CD4-positive, alpha-beta memory T cell (primary cell): ENCODE measurements at regions of chr1 and their contacts with region 1.

Region 1: DNA sequence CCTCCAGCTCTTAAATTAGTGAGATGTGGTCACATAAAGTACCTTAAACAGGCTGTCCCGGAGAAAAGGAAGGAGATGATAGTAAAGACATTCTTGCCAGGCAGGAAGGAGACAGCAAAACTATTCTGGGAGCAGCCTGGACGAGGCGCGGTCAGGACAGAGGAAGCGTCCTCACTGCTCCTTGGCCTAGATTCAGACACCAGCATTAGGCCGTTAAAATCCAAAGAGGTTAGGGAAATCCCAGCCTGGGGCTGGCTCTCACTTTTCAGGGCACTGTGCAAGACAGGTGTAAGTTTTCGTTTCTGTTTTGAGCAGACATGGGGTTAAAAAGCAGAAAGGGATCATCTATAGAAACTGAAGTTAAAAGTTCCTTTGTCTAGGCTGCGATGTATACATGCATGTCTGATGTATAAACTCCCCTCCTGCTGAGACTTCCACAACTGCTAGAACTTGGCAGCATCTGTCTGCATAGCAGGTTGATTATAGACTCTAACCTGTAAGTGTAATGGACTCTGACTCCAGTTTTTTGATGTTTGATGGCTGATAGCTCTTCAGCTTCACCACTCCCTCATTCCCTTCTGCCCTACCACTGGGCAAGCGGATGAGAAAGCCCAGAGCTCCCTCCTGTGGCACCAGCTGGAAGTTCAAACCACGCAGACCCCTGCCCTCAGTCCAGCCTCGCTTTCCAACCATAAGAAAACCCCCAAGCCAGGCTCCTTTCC is 21.5 kb downstream of the STPG1 start:
- DNase-seq: peak; percentile 62 to 75 (median 69)
- H3K4me3 ChIP-seq: peak overlapping the region in 1 of 2 donors; percentile 17
- H3K4me3 Mint-ChIP-seq: peak overlapping the region; percentile 81 to 92 (median 86)
- H3K27ac ChIP-seq: peak overlapping the region; percentile 72
- H3K27ac Mint-ChIP-seq: peak overlapping the region; percentile 94 to 99 (median 98)
- H3K4me1 ChIP-seq: peaks cover 33% of the 10 kb centered on the region
- H3K4me1 Mint-ChIP-seq: peaks cover 23 to 29% (median 26%) of the 10 kb centered on the region in 4 donors
- H3K27me3 ChIP-seq: no peaks in the 10 kb centered on the region
- H3K27me3 Mint-ChIP-seq: no peaks in the 10 kb centered on the region

Region 2: GRCh38 chr1:24186993-24187805 is 204.8 kb before region 1 on chr1 and contains the start of gene IFNLR1:
- CTCF ChIA-PET with region 1: interaction called, 82 read pairs
- POLR2A ChIA-PET with region 1: interaction called, 8 read pairs
- intact Hi-C with region 1: no loop called
- DNase-seq: peak; percentile 42 to 75 (median 57)
- H3K4me3 ChIP-seq: peak within 1 kb of the TSS; percentile 11 to 60
- H3K4me3 Mint-ChIP-seq: peak within 1 kb of the TSS; percentile 86 to 92 (median 90)
- H3K27ac ChIP-seq: peak within 1 kb of the TSS; percentile 50
- H3K27ac Mint-ChIP-seq: peak within 1 kb of the TSS; percentile 53 to 93 (median 83)
- H3K4me1 ChIP-seq: peaks cover 27% of the 10 kb centered on the region
- H3K4me1 Mint-ChIP-seq: peaks cover 20 to 40% (median 34%) of the 10 kb centered on the region in 4 donors
- H3K27me3 ChIP-seq: no peaks in the 10 kb centered on the region
- H3K27me3 Mint-ChIP-seq: no peaks in the 10 kb centered on the region
- total RNA-seq, gene IFNLR1: 3.0 to 4.5 TPM

Region 3: DNA sequence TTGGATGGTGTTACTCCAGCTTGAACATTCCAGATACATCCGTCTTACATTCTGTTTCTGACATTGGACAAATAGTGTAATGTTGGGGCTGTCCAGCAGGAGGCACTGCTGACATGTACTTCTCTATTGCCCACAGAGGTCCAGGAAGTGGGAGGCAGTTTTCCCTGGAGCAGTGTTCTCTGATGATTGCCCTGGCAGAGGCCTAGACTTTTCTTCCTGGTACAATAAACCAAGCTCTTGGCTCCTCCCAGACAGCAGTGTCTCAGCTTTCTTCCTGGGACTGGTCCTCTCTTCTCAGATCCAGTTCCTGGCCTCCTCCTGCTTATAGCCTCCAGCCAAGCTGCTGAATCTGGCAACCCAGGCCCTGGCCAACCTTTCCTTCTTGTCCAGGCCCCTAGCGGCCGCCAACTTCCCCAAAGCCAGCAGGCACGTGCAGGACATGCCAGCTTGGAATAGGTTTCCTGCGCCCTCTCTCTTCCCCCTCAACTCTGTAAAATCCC is 190.1 kb before region 1 on chr1:
- CTCF ChIA-PET with region 1: interaction called, 517 read pairs
- POLR2A ChIA-PET with region 1: interaction called, 86 read pairs
- intact Hi-C with region 1: loop called (anchors 1 kb)
- DNase-seq: peak; percentile 32 to 53 (median 43)
- H3K4me3 ChIP-seq: no peak overlapping the region
- H3K4me3 Mint-ChIP-seq: no peak overlapping the region
- H3K27ac ChIP-seq: no peak overlapping the region
- H3K27ac Mint-ChIP-seq: peak overlapping the region in 3 of 7 donors; percentile 11 to 50 (median 36)
- H3K4me1 ChIP-seq: peaks cover 5% of the 10 kb centered on the region
- H3K4me1 Mint-ChIP-seq: peaks cover 3 to 13% (median 6%) of the 10 kb centered on the region in 4 donors
- H3K27me3 ChIP-seq: no peaks in the 10 kb centered on the region
- H3K27me3 Mint-ChIP-seq: no peaks in the 10 kb centered on the region

Region 4: DNA sequence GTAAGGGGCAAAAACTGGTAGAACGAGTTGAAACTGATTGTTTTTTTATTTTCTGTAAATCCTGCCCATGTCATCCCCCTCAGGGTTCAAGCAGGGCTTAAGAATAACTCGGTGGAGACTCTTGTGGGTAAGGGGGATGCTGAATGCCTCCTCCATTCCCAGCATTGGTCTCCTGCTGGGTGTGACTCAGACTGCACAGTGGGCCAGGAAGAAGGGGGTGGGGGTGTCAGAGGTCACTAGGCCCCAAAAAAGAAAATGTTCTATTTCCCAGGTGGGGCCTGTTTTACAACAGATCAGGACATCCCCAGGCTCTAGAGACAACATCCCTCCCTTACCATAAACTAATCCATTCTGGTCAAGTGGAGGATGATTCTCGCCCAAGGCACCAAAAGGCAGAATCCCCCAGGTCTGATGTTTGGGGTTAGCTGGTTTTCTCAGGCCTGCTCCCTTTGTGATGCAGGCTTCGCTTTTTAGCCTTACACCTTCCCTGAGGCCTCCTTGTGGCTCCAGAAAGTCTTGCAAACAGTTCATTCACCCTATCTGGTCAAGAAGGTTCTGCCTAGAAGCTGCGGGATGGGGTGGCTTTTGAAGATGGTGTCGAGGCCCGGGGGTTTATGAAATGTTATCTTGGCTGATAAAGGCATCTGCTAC is 83.6 kb before region 1 on chr1:
- CTCF ChIA-PET with region 1: no interaction called
- POLR2A ChIA-PET with region 1: no interaction called
- intact Hi-C with region 1: no loop called
- DNase-seq: no peak
- H3K4me3 ChIP-seq: no peak overlapping the region
- H3K4me3 Mint-ChIP-seq: no peak overlapping the region
- H3K27ac ChIP-seq: no peak overlapping the region
- H3K27ac Mint-ChIP-seq: no peak overlapping the region
- H3K4me1 ChIP-seq: no peaks in the 10 kb centered on the region
- H3K4me1 Mint-ChIP-seq: no peaks in the 10 kb centered on the region
- H3K27me3 ChIP-seq: no peaks in the 10 kb centered on the region
- H3K27me3 Mint-ChIP-seq: peaks cover 1 to 5% of the 10 kb centered on the region in 2 donors

Region 5: GRCh38 chr1:24331961-24332673 is 59.9 kb before region 1 on chr1:
- CTCF ChIA-PET with region 1: no interaction called
- POLR2A ChIA-PET with region 1: no interaction called
- intact Hi-C with region 1: no loop called
- DNase-seq: no peak
- H3K4me3 ChIP-seq: no peak overlapping the region
- H3K4me3 Mint-ChIP-seq: no peak overlapping the region
- H3K27ac ChIP-seq: no peak overlapping the region
- H3K27ac Mint-ChIP-seq: no peak overlapping the region
- H3K4me1 ChIP-seq: no peaks in the 10 kb centered on the region
- H3K4me1 Mint-ChIP-seq: no peaks in the 10 kb centered on the region
- H3K27me3 ChIP-seq: no peaks in the 10 kb centered on the region
- H3K27me3 Mint-ChIP-seq: peaks cover 0 to 4% of the 10 kb centered on the region in 2 donors

Region 6: DNA sequence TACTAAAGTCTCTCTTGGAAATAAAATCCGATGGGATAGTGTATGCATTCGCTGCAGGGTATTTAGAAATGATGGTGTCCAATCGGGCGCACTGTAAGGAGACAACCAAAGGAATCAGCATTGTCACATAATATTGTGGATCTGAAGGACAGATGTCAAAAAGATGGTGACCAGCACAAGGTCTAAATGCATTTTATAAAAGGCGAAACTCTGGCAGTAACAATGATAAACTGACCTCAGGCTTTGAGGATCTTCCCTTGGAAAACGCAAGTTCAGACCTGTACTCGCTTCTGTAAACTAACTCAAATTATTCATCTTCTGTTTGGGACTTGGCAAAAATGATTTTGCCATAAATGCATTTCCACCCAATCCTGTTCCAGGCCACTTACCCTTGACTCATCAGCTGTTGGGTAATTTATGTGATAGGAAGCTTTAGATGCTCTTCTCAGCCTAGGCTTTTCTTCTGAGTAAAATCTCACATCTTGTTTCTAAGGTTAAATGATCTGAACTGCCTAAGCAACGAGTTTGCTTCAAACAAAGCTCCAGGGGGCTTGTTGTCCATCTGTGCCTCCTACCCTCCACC is 12.2 kb before region 1 on chr1:
- CTCF ChIA-PET with region 1: interaction called, 29 read pairs
- POLR2A ChIA-PET with region 1: no interaction called
- intact Hi-C with region 1: no loop called
- DNase-seq: no peak
- H3K4me3 ChIP-seq: no peak overlapping the region
- H3K4me3 Mint-ChIP-seq: no peak overlapping the region
- H3K27ac ChIP-seq: no peak overlapping the region
- H3K27ac Mint-ChIP-seq: peak overlapping the region in 1 of 7 donors; percentile 19
- H3K4me1 ChIP-seq: peaks cover 5% of the 10 kb centered on the region
- H3K4me1 Mint-ChIP-seq: peaks cover 7 to 13% (median 8%) of the 10 kb centered on the region in 4 donors
- H3K27me3 ChIP-seq: no peaks in the 10 kb centered on the region
- H3K27me3 Mint-ChIP-seq: no peaks in the 10 kb centered on the region

Region 7: DNA sequence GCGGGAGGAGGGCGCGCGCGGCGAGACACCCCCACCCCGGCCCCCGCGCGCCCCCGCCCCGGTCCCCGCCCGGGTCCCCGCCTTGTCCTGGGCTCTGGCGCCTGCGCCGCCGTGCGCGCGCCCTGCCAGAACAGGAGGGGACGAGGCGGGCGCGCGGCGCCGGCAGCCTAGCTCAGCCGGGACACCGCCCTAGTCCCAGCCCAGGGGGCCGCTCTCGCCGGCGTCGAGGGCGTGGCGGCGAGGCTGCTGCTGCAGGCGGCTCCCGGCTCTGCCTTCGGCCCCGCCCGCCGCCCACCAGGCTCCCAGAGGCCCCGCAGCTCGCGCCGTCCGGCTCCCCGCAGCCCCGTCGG is 110.6 kb after region 1 on chr1 and contains the start of gene RCAN3:
- CTCF ChIA-PET with region 1: interaction called, 6 read pairs
- POLR2A ChIA-PET with region 1: interaction called, 20 read pairs
- intact Hi-C with region 1: no loop called
- DNase-seq: peak; percentile 89 to 93 (median 90)
- H3K4me3 ChIP-seq: peak within 1 kb of the TSS; percentile 83 to 84
- H3K4me3 Mint-ChIP-seq: peak within 1 kb of the TSS; percentile 96 to 100 (median 99)
- H3K27ac ChIP-seq: peak within 1 kb of the TSS; percentile 93
- H3K27ac Mint-ChIP-seq: peak within 1 kb of the TSS; percentile 92 to 99 (median 98)
- H3K4me1 ChIP-seq: peaks cover 67% of the 10 kb centered on the region
- H3K4me1 Mint-ChIP-seq: peaks cover 43 to 83% (median 57%) of the 10 kb centered on the region in 4 donors
- H3K27me3 ChIP-seq: no peaks in the 10 kb centered on the region
- H3K27me3 Mint-ChIP-seq: no peaks in the 10 kb centered on the region
- total RNA-seq, gene RCAN3: 171 to 178 TPM

Region 8: GRCh38 chr1:24635195-24635843 is 243.3 kb after region 1 on chr1:
- CTCF ChIA-PET with region 1: interaction called, 14 read pairs
- POLR2A ChIA-PET with region 1: no interaction called
- intact Hi-C with region 1: loop called (anchors 1 kb)
- DNase-seq: peak in 4 of 5 donors; percentile 55 to 63 (median 57)
- H3K4me3 ChIP-seq: no peak overlapping the region
- H3K4me3 Mint-ChIP-seq: no peak overlapping the region
- H3K27ac ChIP-seq: no peak overlapping the region
- H3K27ac Mint-ChIP-seq: no peak overlapping the region
- H3K4me1 ChIP-seq: no peaks in the 10 kb centered on the region
- H3K4me1 Mint-ChIP-seq: peaks cover 2 to 11% (median 3%) of the 10 kb centered on the region in 4 donors
- H3K27me3 ChIP-seq: no peaks in the 10 kb centered on the region
- H3K27me3 Mint-ChIP-seq: peaks cover 2 to 5% of the 10 kb centered on the region in 2 donors